ENCODE measurements at regions of chr1 and their contacts with region 1.

Region 1: DNA sequence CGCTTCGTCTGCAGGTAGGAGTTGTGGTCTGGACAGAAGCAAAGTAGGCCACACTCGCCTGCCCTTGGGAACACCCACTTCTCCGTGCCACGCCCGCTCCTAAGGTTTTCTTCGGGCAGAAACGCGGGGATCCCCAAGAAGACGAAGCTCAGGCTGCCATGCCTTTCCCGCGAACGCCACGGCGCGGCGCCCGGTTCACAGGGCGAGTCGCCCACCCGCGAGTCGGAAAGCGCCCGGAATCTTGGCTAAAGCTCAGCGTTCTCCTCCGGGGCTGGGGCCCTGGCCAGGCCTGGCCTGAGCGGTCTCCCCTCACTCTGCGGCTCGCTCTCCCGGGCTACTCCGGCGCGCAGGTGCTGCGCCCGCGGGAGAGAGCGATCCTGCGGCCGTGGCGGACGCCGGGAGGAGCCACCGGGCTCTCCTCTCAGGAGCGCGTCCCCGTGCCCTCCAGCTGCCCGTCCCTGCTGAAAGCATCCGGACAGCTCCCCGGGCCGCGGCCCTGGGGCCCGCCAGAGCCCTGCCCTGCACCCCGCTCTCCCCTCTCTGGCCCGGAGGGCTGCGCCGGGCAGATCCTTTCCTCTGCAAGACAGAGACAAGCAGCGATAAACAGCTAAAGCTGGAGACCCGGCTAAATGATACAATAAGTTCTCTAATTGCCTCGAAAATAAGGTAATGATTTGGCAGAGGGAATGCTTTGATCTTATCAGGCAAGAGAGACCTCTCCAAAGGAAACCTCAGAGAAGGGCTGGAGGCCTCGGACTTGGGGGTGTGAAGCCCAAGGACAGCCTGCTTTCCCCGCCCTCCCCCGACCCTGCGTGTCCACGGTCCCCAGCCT is 6.7 kb upstream of the WNT2B start:
- DNase-seq: peak; percentile 70
- H3K4me3 ChIP-seq: peak overlapping the region; percentile 43 to 44
- H3K27ac ChIP-seq: peak overlapping the region; percentile 58 to 74
- H3K4me1 ChIP-seq: no peaks in the 10 kb centered on the region
- H3K27me3 ChIP-seq: no peaks in the 10 kb centered on the region
- CTCF ChIP-seq: peak; percentile 38 to 86 (median 70)
- POLR2A ChIP-seq: no peak

Region 2: DNA sequence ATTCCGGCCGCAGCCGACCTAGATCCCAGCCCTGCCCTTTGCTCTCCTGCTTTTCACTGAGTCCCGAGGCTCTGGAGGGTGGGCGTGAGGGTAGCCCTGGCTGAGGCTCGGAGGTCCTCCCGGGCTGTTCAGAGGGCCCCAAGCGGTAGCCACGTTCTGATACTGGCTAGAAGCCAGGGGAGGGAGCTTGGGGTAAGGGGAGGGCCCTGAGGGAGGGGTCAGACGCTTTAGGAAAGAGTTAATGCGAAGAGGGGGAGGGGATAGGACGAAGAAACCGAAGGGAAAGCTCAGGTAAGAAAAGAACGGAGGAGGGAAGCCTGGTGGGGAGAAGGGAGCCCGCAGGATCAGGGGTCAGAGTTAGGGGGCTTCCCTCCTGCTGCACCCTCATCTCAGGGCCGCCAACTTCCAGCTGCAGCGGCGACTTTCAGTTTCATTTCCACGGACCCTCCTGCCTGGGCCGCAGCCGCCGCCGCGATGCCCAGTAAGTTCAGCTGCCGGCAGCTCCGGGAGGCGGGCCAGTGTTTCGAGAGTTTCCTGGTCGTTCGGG is 172.5 kb after region 1 on chr1 and contains the start of gene MOV10:
- intact Hi-C with region 1: loop called (anchors 10 kb)
- DNase-seq: peak; percentile 58
- H3K4me3 ChIP-seq: peak within 1 kb of the TSS; percentile 66 to 75
- H3K27ac ChIP-seq: peak within 1 kb of the TSS; percentile 94
- H3K4me1 ChIP-seq: no peaks in the 10 kb centered on the region
- H3K27me3 ChIP-seq: no peaks in the 10 kb centered on the region
- CTCF ChIP-seq: no peak
- POLR2A ChIP-seq: no peak
- total RNA-seq, gene MOV10: 47.0 to 169 TPM

Region 3: DNA sequence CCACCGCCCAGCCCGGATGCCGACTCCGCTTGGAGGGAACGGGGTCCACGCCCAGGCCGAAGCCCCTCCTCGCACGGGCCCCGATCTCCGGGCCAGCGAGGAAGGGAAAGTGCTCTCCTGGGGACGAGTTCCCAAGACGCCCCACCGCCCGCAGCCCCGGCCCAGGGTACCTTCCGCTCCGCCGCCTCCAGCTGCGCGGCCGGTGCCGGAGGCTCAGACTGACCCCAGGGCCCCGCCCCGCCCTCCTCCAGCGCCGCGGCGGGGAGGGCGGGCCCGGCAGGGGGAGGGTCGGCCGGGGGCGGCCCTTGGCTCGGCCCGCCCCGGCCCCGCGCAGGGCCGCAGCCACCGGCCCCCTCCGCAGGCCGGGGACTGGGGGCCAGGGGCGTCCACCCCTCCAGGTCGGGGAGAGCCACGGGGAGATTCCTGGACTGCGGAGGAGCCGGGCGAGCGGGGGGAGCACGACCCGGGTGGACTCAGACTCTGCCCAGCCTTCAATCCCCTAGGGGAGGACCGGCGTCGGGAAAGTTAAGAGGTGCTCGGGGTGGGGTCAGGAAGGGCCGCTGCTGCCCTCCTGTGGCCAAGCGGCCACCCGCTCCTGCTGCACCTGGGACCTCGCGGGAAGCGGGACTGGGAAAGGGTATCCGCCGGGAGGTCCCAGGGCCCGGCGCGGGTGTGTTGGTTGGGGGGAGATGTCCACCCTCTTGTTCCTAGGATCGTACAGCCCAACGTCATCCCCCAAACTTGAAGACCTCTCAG is 205.1 kb after region 1 on chr1 and contains the start of gene RHOC:
- intact Hi-C with region 1: loop called (anchors 2 kb)
- DNase-seq: peak; percentile 90
- H3K4me3 ChIP-seq: peak within 1 kb of the TSS; percentile 96 to 99
- H3K27ac ChIP-seq: peak within 1 kb of the TSS; percentile 98
- H3K4me1 ChIP-seq: peaks cover 21% of the 10 kb centered on the region
- H3K27me3 ChIP-seq: no peaks in the 10 kb centered on the region
- CTCF ChIP-seq: peak; percentile 89 to 95 (median 92)
- POLR2A ChIP-seq: peak; percentile 91
- total RNA-seq, gene RHOC: 272 to 373 TPM

Measured in prostate gland (tissue), 2 donors.